Activated CD4-positive, alpha-beta T cell treated with anti-CD3 and anti-CD28 coated beads for 36 hours (primary cell): ENCODE measurements at regions of chr1 and their contacts with region 1.

Region 1: GRCh38 chr1:39214998-39215873 is 10.7 kb downstream of the MACF1 start:
- DNase-seq: peak; percentile 63
- ATAC-seq: peak; percentile 77
- H3K4me3 Mint-ChIP-seq: peak overlapping the region; percentile 90
- H3K27ac Mint-ChIP-seq: peak overlapping the region; percentile 97
- H3K4me1 Mint-ChIP-seq: peaks cover 53% of the 10 kb centered on the region
- H3K27me3 Mint-ChIP-seq: no peaks in the 10 kb centered on the region

Region 2: DNA sequence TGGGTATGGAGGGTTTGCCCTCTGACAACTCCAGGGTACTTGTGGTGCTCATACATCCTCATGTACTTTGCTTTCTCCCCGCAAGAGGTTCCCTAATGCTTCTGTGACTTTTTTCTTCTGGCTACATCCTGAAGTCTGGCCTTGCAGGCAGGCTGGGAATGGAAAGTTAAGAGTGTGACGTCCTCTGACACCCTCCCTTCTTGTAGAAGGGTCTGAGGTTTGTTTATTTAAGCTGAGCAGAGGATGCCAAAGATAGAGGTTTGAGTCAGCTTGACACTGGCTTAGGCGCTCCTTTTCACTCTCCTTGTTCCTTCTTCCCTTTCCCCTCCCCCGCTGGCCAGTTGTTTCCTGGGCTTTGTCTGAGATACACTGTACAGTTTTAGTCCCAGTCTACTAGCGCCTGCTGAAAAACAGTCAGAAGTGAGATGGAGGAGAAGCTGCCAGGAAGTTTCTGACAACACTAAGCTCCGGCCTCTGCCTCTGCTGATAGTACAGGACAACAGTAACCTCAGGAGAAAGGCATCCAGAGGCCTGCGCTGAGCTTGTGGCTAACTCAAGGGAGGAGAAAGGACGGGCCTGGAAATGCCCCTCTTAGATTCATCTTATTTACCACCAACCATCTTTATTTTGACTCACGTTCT is 10.7 kb before region 1 on chr1 and contains the start of gene MACF1:
- CTCF ChIA-PET with region 1: interaction called, 44 read pairs
- POLR2A ChIA-PET with region 1: interaction called, 17 read pairs
- intact Hi-C with region 1: loop called in 1 of 2 experiments (anchors 1 kb)
- DNase-seq: peak; percentile 61
- ATAC-seq: peak; percentile 53
- H3K4me3 Mint-ChIP-seq: peak within 1 kb of the TSS; percentile 84
- H3K27ac Mint-ChIP-seq: peak within 1 kb of the TSS; percentile 96
- H3K4me1 Mint-ChIP-seq: peaks cover 65% of the 10 kb centered on the region
- H3K27me3 Mint-ChIP-seq: no peaks in the 10 kb centered on the region
- total RNA-seq, gene MACF1: 192 to 195 TPM

Region 3: DNA sequence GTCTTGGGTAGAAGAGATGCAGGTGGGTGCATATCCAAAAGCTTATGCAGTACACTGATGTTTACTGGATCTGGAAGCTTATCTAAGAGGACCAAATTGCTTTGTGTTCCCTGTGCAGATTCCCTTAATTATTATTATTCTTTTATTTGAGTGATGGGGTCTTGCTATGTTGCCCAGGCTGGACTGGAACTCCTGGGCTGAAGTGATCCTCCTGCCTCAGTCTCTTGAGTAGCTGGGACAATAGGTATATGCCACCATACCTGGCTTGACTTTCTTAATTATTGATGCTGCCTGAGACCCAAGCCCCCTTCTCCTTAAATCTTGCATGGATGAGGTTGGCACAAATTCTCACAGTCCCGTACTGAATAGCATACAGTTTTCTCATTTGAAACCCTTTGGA is 72.3 kb after region 1 on chr1:
- CTCF ChIA-PET with region 1: no interaction called
- POLR2A ChIA-PET with region 1: no interaction called
- intact Hi-C with region 1: no loop called
- DNase-seq: no peak
- ATAC-seq: no peak
- H3K4me3 Mint-ChIP-seq: no peak overlapping the region
- H3K27ac Mint-ChIP-seq: no peak overlapping the region
- H3K4me1 Mint-ChIP-seq: no peaks in the 10 kb centered on the region
- H3K27me3 Mint-ChIP-seq: no peaks in the 10 kb centered on the region

Region 4: GRCh38 chr1:39387452-39387851 is 172.2 kb after region 1 on chr1:
- CTCF ChIA-PET with region 1: no interaction called
- POLR2A ChIA-PET with region 1: no interaction called
- intact Hi-C with region 1: no loop called
- DNase-seq: no peak
- ATAC-seq: no peak
- H3K4me3 Mint-ChIP-seq: no peak overlapping the region
- H3K27ac Mint-ChIP-seq: peak overlapping the region; percentile 30
- H3K4me1 Mint-ChIP-seq: peaks cover 16% of the 10 kb centered on the region
- H3K27me3 Mint-ChIP-seq: no peaks in the 10 kb centered on the region

Region 5: DNA sequence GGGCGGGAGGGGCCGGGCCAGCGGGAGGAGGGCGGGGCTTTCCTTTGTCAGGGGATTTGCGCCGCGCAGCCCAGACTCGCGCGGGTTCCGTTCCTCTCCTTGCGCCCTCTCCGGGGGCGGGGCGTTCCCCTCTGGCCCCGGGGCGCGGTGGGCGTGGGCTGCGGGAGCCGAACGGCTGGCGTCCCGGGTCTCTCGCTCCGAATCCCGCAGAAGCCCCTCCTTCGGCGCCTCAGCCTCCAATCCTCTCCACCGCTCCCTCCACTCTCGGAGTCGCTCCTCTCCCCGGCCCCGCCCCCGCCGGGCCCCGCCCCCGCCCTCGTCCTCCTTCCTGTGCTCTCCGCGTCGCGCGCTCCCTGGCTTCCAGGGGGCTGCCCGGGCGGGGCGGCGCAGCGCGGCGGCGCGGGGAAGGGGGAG is 193.4 kb after region 1 on chr1:
- CTCF ChIA-PET with region 1: no interaction called
- POLR2A ChIA-PET with region 1: no interaction called
- intact Hi-C with region 1: no loop called
- DNase-seq: peak; percentile 89
- ATAC-seq: peak; percentile 79
- H3K4me3 Mint-ChIP-seq: peak overlapping the region; percentile 80
- H3K27ac Mint-ChIP-seq: no peak overlapping the region
- H3K4me1 Mint-ChIP-seq: peaks cover 63% of the 10 kb centered on the region
- H3K27me3 Mint-ChIP-seq: no peaks in the 10 kb centered on the region

Region 6: DNA sequence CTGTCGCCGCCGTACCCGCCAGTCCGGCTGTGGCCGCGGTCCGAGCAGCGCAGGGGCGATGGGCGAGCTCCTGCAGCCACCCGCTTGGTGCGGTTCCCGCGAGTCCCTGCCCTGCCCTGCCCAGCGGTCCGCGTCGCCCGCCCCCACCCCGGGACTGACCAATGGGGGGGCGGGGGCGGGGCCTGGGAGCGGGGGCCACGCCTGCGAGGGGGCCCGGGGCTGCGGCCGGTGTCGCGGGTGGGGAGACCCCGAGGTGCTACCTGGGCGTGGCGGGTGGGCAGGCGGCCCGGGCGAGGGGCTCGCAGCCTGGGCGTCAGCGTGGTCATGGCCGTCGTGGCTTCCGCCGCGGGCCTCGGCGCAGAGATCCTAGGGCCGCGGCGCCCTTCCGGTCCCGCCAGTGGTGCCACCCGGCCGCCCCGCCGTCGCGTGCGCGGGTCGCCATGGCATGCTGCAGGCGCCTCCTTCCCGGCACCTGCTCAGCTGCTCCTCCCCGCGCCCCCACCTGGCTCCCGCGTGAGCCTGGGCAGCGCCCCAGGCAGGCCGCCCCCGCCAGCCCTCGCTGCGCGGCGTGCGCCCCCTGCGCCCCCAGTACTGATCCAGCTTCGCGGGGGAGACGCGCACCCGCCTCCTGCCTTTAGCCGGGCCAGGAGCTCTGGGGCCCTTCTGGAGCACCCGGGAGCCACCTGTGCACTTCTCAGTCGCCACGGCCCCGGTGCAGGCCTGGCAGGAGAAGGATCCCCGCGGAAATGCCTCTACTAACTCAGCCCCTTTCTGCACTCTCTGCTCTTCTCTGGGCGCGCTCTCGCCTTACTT is 573.7 kb after region 1 on chr1 and contains the start of gene BMP8B:
- CTCF ChIA-PET with region 1: no interaction called
- POLR2A ChIA-PET with region 1: no interaction called
- intact Hi-C with region 1: no loop called
- DNase-seq: peak; percentile 59
- ATAC-seq: peak; percentile 80
- H3K4me3 Mint-ChIP-seq: peak within 1 kb of the TSS; percentile 66
- H3K27ac Mint-ChIP-seq: no peak within 1 kb of the TSS
- H3K4me1 Mint-ChIP-seq: peaks cover 7% of the 10 kb centered on the region
- H3K27me3 Mint-ChIP-seq: peaks cover 29% of the 10 kb centered on the region
- total RNA-seq, gene BMP8B: 0.21 to 0.28 TPM